GM12878 (cell line): ENCODE measurements at regions of chr7 and their contacts with region 1.

Region 1: DNA sequence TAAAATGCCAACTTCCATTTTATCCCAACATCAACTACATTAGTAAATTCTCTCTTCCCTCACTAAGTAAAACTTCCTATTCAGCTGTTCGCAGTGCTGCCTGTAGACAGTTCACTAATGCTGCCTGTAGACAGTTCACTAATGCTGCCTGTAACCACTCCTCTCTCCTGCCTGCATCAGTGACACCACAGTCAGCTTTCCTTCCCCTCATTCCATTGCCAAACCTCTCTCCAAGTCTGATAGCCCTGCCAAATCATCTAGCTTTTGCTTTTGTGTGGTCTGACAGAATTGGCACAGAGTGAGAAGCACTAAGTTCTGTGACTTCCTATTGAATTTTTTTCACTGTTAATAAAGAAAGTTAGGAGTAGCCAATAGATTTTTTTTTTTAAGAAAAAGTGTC is 43.0 kb upstream of the MACC1 start:
- DNase-seq: no peak
- ATAC-seq: no peak
- H3K4me3 ChIP-seq: no peak overlapping the region
- H3K27ac ChIP-seq: no peak overlapping the region
- H3K4me1 ChIP-seq: no peaks in the 10 kb centered on the region
- H3K27me3 ChIP-seq: no peaks in the 10 kb centered on the region
- CTCF ChIP-seq: no peak
- EP300 ChIP-seq: no peak
- POLR2A ChIP-seq: no peak
- RAD21 ChIP-seq: no peak

Region 2: GRCh38 chr7:19397911-19398310 is 862.3 kb before region 1 on chr7:
- CTCF ChIA-PET with region 1: no interaction called
- POLR2A ChIA-PET with region 1: no interaction called
- RAD21 ChIA-PET with region 1: no interaction called
- SMC1A ChIA-PET with region 1: no interaction called
- in situ Hi-C with region 1: no loop called
- intact Hi-C with region 1: no loop called
- DNase-seq: peak; percentile 32
- ATAC-seq: peak; percentile 81
- H3K4me3 ChIP-seq: no peak overlapping the region
- H3K27ac ChIP-seq: no peak overlapping the region
- H3K4me1 ChIP-seq: no peaks in the 10 kb centered on the region
- H3K27me3 ChIP-seq: no peaks in the 10 kb centered on the region
- CTCF ChIP-seq: no peak
- EP300 ChIP-seq: no peak
- POLR2A ChIP-seq: no peak
- RAD21 ChIP-seq: no peak

Region 3: GRCh38 chr7:20229646-20230500 is 30.4 kb before region 1 on chr7:
- CTCF ChIA-PET with region 1: no interaction called
- POLR2A ChIA-PET with region 1: no interaction called
- RAD21 ChIA-PET with region 1: no interaction called
- SMC1A ChIA-PET with region 1: no interaction called
- in situ Hi-C with region 1: no loop called
- intact Hi-C with region 1: no loop called
- DNase-seq: no peak
- ATAC-seq: no peak
- H3K4me3 ChIP-seq: no peak overlapping the region
- H3K27ac ChIP-seq: no peak overlapping the region
- H3K4me1 ChIP-seq: peaks cover 9% of the 10 kb centered on the region
- H3K27me3 ChIP-seq: no peaks in the 10 kb centered on the region
- CTCF ChIP-seq: no peak
- EP300 ChIP-seq: no peak
- POLR2A ChIP-seq: no peak
- RAD21 ChIP-seq: no peak

Region 4: DNA sequence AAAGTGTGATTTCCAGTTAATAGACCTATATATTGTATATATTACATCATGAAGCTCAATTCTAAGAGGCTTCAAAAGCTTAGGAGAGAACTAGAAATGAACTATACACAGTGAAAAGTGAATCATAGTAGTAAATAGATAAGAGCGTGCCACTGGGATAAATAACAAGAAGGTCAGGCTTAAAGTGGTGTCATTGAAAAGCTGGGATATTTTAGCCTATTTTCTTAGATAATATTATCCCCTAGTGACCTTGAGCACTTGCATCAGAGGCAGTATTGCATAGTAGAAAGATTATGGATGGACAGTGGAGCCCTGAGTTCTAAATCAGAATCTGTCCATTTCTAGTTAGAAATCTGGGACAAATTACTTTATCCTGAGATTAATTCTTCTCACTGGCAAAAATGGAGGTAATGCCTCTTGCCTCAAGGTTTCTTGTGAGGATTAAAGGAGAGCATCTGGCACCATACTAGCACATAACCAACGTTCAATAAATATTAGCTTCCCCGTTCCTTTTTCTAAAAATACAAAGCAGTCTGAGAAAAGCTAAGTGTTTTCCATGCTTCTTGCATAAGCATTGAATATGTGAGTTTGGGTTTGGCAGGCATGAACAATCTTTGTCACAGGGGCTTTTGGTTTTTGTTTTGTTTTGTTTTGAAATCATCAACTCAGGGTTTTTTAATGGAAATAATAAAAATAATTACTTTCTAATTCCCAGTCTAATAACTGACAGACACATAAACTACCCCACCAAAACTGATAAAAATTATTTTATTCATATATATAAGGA is 15.7 kb before region 1 on chr7:
- CTCF ChIA-PET with region 1: interaction called, 10 read pairs
- POLR2A ChIA-PET with region 1: interaction called, 4 read pairs
- RAD21 ChIA-PET with region 1: interaction called, 6 read pairs
- SMC1A ChIA-PET with region 1: interaction called, 10 read pairs
- in situ Hi-C with region 1: no loop called
- intact Hi-C with region 1: no loop called
- DNase-seq: no peak
- ATAC-seq: no peak
- H3K4me3 ChIP-seq: no peak overlapping the region
- H3K27ac ChIP-seq: no peak overlapping the region
- H3K4me1 ChIP-seq: peaks cover 29% of the 10 kb centered on the region
- H3K27me3 ChIP-seq: no peaks in the 10 kb centered on the region
- CTCF ChIP-seq: no peak
- EP300 ChIP-seq: no peak
- POLR2A ChIP-seq: no peak
- RAD21 ChIP-seq: no peak

Region 5: GRCh38 chr7:20249920-20250319 is 10.3 kb before region 1 on chr7:
- CTCF ChIA-PET with region 1: interaction called, 12 read pairs
- POLR2A ChIA-PET with region 1: interaction called, 4 read pairs
- RAD21 ChIA-PET with region 1: interaction called, 4 read pairs
- SMC1A ChIA-PET with region 1: interaction called, 18 read pairs
- in situ Hi-C with region 1: no loop called
- intact Hi-C with region 1: no loop called
- DNase-seq: no peak
- ATAC-seq: peak; percentile 74
- H3K4me3 ChIP-seq: no peak overlapping the region
- H3K27ac ChIP-seq: no peak overlapping the region
- H3K4me1 ChIP-seq: no peaks in the 10 kb centered on the region
- H3K27me3 ChIP-seq: no peaks in the 10 kb centered on the region
- CTCF ChIP-seq: no peak
- EP300 ChIP-seq: no peak
- POLR2A ChIP-seq: no peak
- RAD21 ChIP-seq: no peak

Region 6: DNA sequence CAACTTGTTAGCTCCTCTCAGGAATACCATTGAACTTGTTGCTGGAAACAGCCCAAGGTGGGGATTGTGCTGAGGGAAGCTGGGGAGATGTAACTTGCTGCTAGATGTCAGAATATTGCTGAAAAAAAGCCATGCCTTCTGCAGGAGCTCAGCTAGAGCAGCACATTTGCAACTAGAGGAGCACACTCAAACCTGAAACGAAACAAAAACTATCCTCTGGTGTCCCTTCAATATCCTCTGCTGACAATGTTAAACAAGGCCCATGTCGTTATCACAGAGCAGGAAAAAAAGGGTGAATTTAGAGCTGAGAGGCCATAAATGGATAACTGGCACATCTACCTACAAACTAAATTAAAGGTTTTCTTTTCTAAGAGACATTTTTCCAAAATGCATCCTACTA is 10.6 kb after region 1 on chr7:
- CTCF ChIA-PET with region 1: interaction called, 5 read pairs
- POLR2A ChIA-PET with region 1: interaction called, 5 read pairs
- RAD21 ChIA-PET with region 1: interaction called, 5 read pairs
- SMC1A ChIA-PET with region 1: interaction called, 23 read pairs
- in situ Hi-C with region 1: no loop called
- intact Hi-C with region 1: no loop called
- DNase-seq: peak; percentile 74
- ATAC-seq: peak; percentile 90
- H3K4me3 ChIP-seq: no peak overlapping the region
- H3K27ac ChIP-seq: peak overlapping the region; percentile 73
- H3K4me1 ChIP-seq: peaks cover 17% of the 10 kb centered on the region
- H3K27me3 ChIP-seq: no peaks in the 10 kb centered on the region
- CTCF ChIP-seq: no peak
- EP300 ChIP-seq: no peak
- POLR2A ChIP-seq: no peak
- RAD21 ChIP-seq: no peak